ENCODE measurements at regions of chr4 and their contacts with region 1.

Region 1: GRCh38 chr4:40325189-40326019 is 9.7 kb upstream of the CHRNA9 start:
- DNase-seq: peak; percentile 72
- H3K4me3 Mint-ChIP-seq: no peak overlapping the region
- H3K27ac Mint-ChIP-seq: no peak overlapping the region
- H3K4me1 Mint-ChIP-seq: peaks cover 26% of the 10 kb centered on the region
- H3K27me3 Mint-ChIP-seq: no peaks in the 10 kb centered on the region
- CTCF ChIP-seq: peak; percentile 80

Region 2: GRCh38 chr4:40309250-40309774 is 16.1 kb before region 1 on chr4:
- CTCF ChIA-PET with region 1: interaction called, 12 read pairs
- POLR2A ChIA-PET with region 1: interaction called, 3 read pairs
- intact Hi-C with region 1: no loop called
- DNase-seq: peak; percentile 90
- H3K4me3 Mint-ChIP-seq: no peak overlapping the region
- H3K27ac Mint-ChIP-seq: no peak overlapping the region
- H3K4me1 Mint-ChIP-seq: peaks cover 25% of the 10 kb centered on the region
- H3K27me3 Mint-ChIP-seq: no peaks in the 10 kb centered on the region
- CTCF ChIP-seq: peak; percentile 81

Region 3: GRCh38 chr4:40473578-40474388 is 148.4 kb after region 1 on chr4:
- CTCF ChIA-PET with region 1: no interaction called
- POLR2A ChIA-PET with region 1: no interaction called
- intact Hi-C with region 1: no loop called
- DNase-seq: no peak
- H3K4me3 Mint-ChIP-seq: no peak overlapping the region
- H3K27ac Mint-ChIP-seq: no peak overlapping the region
- H3K4me1 Mint-ChIP-seq: no peaks in the 10 kb centered on the region
- H3K27me3 Mint-ChIP-seq: no peaks in the 10 kb centered on the region
- CTCF ChIP-seq: no peak

Region 4: GRCh38 chr4:40629401-40630334 is 304.3 kb after region 1 on chr4 and contains the start of gene RBM47:
- CTCF ChIA-PET with region 1: interaction called, 6 read pairs
- POLR2A ChIA-PET with region 1: no interaction called
- intact Hi-C with region 1: loop called (anchors 5 kb)
- DNase-seq: peak; percentile 91
- H3K4me3 Mint-ChIP-seq: peak within 1 kb of the TSS; percentile 91
- H3K27ac Mint-ChIP-seq: peak within 1 kb of the TSS; percentile 82
- H3K4me1 Mint-ChIP-seq: peaks cover 30% of the 10 kb centered on the region
- H3K27me3 Mint-ChIP-seq: no peaks in the 10 kb centered on the region
- CTCF ChIP-seq: no peak
- total RNA-seq, gene RBM47: 1.8 and 2.0 TPM in 2 replicates

Region 5: DNA sequence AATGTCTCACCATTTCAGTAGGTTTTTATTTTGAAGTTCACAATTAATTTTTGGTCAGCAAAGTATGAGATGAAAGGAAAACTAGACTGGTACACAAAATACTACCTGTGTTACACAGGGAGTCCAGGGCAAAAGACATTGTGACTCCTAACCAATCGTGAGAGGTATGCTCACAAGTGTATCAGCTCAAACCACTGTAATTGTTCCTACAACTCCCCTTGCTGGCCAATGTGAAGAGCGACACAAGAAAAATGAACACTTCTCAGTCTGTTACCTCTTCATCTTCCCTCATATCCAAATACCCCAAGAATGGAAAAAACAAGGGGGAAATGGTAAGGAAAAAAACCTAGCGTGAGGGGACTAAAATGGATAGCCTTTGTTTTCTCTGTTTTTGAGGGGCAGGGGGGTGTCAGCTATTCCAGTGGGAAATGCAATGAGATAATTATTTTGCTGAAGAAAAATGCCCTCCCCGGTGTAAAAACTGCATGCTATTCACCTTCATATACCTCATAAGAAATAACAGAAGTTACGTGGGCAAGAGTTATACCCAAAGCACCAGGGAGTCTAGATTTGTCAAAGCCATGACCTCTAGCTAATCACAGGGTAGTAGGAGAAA is 393.7 kb after region 1 on chr4:
- CTCF ChIA-PET with region 1: interaction called, 13 read pairs
- POLR2A ChIA-PET with region 1: no interaction called
- intact Hi-C with region 1: loop called (anchors 2 kb)
- DNase-seq: peak; percentile 74
- H3K4me3 Mint-ChIP-seq: no peak overlapping the region
- H3K27ac Mint-ChIP-seq: no peak overlapping the region
- H3K4me1 Mint-ChIP-seq: no peaks in the 10 kb centered on the region
- H3K27me3 Mint-ChIP-seq: no peaks in the 10 kb centered on the region
- CTCF ChIP-seq: peak; percentile 60